WTC11 (cell line): ENCODE measurements at regions of chr11 and their contacts with region 1.

Region 1: GRCh38 chr11:18768472-18768901 is 23.1 kb downstream of the PTPN5 start:
- DNase-seq: no peak
- ATAC-seq: no peak
- H3K4me3 Mint-ChIP-seq: no peak overlapping the region
- H3K27ac Mint-ChIP-seq: no peak overlapping the region
- H3K4me1 Mint-ChIP-seq: peaks cover 34% of the 10 kb centered on the region
- H3K27me3 Mint-ChIP-seq: peaks cover 2% of the 10 kb centered on the region
- CTCF ChIP-seq: no peak

Region 2: GRCh38 chr11:18361154-18361553 is 407.3 kb before region 1 on chr11:
- CTCF ChIA-PET with region 1: no interaction called
- POLR2A ChIA-PET with region 1: no interaction called
- DNase-seq: no peak
- ATAC-seq: no peak
- H3K4me3 Mint-ChIP-seq: no peak overlapping the region
- H3K27ac Mint-ChIP-seq: no peak overlapping the region
- H3K4me1 Mint-ChIP-seq: no peaks in the 10 kb centered on the region
- H3K27me3 Mint-ChIP-seq: no peaks in the 10 kb centered on the region
- CTCF ChIP-seq: no peak

Region 3: GRCh38 chr11:18706330-18707243 is 61.9 kb before region 1 on chr11:
- CTCF ChIA-PET with region 1: interaction called, 10 read pairs
- POLR2A ChIA-PET with region 1: no interaction called
- DNase-seq: peak; percentile 69
- ATAC-seq: peak; percentile 81
- H3K4me3 Mint-ChIP-seq: peak overlapping the region; percentile 79
- H3K27ac Mint-ChIP-seq: no peak overlapping the region
- H3K4me1 Mint-ChIP-seq: peaks cover 13% of the 10 kb centered on the region
- H3K27me3 Mint-ChIP-seq: peaks cover 67% of the 10 kb centered on the region
- CTCF ChIP-seq: no peak

Region 4: DNA sequence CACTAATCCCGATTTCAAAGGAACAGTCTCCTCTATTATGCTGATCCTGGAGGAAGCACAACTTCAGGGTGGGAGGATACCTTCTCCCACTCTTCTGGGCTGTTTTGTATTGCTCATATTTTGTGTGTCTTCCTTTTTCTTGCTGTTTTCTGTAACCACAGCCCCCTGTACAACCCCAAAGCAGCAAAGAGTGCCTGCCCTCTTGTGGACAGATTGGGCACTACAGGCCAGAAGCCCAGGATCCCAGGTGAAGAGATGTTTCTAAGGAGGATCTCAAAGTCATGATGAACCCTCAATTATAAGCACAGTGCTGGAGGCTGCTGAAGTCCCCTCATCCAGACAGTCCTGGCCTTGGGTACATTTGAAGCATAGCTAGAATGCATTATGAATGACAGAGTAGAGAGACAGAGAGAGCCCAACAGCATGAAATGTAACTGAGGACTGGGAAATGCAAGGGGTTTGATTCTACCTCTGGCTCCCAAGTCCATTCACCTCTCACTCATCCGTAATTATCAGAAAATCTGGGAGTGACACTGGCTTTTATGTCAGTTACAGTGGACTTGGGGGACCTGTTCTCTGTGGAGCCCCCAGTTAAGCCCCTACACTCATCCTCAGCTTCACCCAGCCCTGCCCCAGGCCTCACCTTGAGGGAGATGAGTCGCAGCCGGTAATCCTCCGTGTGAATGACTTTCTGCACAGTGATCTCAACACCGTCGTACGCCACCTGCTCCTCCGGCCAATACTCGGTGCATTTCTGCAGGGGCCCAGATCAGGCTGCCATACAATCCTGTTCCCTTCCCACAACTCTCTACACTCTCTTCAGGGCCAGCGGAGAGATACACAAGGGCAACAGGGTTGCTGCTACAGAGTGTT is 36.3 kb before region 1 on chr11:
- CTCF ChIA-PET with region 1: interaction called, 21 read pairs
- POLR2A ChIA-PET with region 1: no interaction called
- DNase-seq: peak; percentile 77
- ATAC-seq: peak; percentile 46
- H3K4me3 Mint-ChIP-seq: no peak overlapping the region
- H3K27ac Mint-ChIP-seq: no peak overlapping the region
- H3K4me1 Mint-ChIP-seq: peaks cover 11% of the 10 kb centered on the region
- H3K27me3 Mint-ChIP-seq: no peaks in the 10 kb centered on the region
- CTCF ChIP-seq: peak; percentile 98

Region 5: DNA sequence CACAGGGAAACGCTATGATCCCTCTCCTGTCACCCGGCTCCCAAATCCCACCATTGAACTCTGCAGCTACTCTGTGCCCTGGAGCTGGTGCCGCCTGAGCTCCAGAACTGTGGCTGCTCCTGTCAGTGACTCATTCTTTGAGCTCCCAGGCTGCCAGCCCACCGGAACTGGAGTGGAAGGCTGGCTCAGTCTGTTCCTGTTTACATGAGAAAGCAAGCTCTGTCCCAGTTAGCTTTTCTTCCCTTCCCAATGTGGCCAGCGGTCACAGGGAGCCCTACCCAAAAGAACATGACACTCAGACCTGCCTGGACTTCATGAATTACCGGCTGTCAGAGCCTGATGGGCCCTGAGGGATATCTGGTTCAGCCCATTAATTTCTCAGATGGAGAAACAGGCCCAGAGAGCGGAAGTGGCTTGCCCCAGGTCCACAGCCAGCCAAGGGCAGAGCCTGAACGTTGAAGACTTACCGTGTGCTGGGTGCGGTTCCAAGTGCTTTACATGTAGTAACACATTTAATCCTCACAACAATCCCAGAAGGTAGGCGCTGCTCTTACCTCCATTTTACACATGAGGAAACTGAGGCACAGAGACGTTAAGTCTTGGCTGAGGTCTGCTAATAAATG is 18.7 kb before region 1 on chr11:
- CTCF ChIA-PET with region 1: interaction called, 19 read pairs
- POLR2A ChIA-PET with region 1: interaction called, 5 read pairs
- DNase-seq: peak; percentile 30
- ATAC-seq: peak; percentile 85
- H3K4me3 Mint-ChIP-seq: no peak overlapping the region
- H3K27ac Mint-ChIP-seq: no peak overlapping the region; the same call in 1 of the 2 replicates
- H3K4me1 Mint-ChIP-seq: peaks cover 16% of the 10 kb centered on the region
- H3K27me3 Mint-ChIP-seq: no peaks in the 10 kb centered on the region
- CTCF ChIP-seq: no peak

Region 6: GRCh38 chr11:18791207-18791968 is 22.9 kb after region 1 on chr11 and contains the start of gene PTPN5:
- CTCF ChIA-PET with region 1: interaction called, 15 read pairs
- POLR2A ChIA-PET with region 1: no interaction called
- DNase-seq: peak; percentile 64
- ATAC-seq: peak; percentile 63
- H3K4me3 Mint-ChIP-seq: peak within 1 kb of the TSS; percentile 83
- H3K27ac Mint-ChIP-seq: no peak within 1 kb of the TSS
- H3K4me1 Mint-ChIP-seq: peaks cover 11% of the 10 kb centered on the region
- H3K27me3 Mint-ChIP-seq: peaks cover 69% of the 10 kb centered on the region
- CTCF ChIP-seq: no peak
- total RNA-seq, gene PTPN5: 4.5 to 7.4 TPM (median 6.7 TPM) in 3 replicates

Region 7: DNA sequence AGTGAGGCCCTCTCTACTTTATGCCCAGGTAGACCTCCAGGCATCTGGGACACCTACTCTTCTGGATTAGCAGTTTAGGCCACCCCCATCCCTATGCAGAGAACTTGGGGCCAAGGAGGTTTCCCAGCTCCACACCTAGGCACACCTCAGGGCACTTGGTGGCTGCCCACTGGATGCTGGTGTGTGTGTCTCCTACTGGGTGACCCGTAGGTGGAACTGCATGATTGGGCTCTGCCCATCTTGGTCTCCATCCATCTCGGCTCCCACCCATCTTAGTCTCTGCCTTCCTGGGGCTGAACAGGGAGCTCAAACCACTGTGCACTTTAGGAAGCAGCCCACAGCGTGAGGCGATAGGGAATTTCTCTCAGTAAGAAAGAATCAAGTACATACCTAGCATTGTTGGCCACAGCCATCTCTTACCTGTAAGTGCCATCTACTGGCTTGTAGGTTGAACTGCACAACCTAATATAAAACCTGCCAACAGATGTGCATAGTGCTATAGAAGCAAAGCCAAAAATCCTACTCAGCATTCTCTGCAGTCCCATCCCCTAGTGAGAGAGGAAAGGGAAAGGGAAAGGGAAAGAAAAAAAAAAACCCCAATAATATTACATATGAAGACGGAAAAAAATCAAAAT is 84.7 kb after region 1 on chr11:
- CTCF ChIA-PET with region 1: interaction called, 10 read pairs
- POLR2A ChIA-PET with region 1: no interaction called
- DNase-seq: peak; percentile 36
- ATAC-seq: peak; percentile 98
- H3K4me3 Mint-ChIP-seq: no peak overlapping the region
- H3K27ac Mint-ChIP-seq: no peak overlapping the region
- H3K4me1 Mint-ChIP-seq: peaks cover 3% of the 10 kb centered on the region
- H3K27me3 Mint-ChIP-seq: peaks cover 31% of the 10 kb centered on the region
- CTCF ChIP-seq: peak; percentile 45; the same call in 1 of the 2 replicates